ENCODE measurements at regions of chr2 and their contacts with region 1.

Region 1: DNA sequence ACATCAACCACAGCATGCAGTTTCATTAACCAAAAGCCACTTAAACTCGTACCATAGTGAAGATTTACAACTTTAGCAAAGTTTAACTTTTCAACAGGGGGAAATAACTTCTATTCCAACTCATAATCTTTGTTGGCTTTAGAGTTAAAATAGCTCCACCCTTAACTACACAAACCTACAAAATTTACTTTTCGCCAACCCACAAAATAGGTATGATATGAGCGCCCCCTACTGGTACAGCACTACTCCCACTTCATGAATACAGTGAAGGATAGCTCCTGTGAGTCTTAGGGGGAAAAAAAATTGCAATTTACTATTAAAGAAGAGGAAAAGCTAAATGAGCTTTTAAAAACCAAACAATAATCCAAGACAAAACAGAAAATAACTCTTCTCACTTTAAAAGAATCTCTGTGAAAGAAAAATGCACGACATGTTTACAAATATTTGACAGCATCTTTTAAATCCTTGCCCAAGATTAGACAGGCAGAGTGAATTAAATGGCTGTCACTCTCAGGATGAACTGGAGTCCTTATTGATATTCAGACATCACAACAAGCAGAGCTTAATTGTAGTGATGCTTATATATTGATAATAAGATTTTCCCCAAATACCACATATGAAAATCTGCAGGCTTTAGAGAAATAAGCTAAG is 32.2 kb downstream of the TMEFF2 start:
- DNase-seq: peak; percentile 7 to 70 (median 57)
- ATAC-seq: peak; percentile 82
- H3K4me3 ChIP-seq: no peak overlapping the region
- H3K4me3 Mint-ChIP-seq: peak overlapping the region in 7 of 10 donors; percentile 31 to 56 (median 44)
- H3K27ac ChIP-seq: no peak overlapping the region
- H3K27ac Mint-ChIP-seq: no peak overlapping the region
- H3K4me1 ChIP-seq: peaks cover 0 to 9% of the 10 kb centered on the region in 2 donors
- H3K4me1 Mint-ChIP-seq: peaks cover 8 to 22% (median 13%) of the 10 kb centered on the region in 7 donors
- H3K27me3 ChIP-seq: no peaks in the 10 kb centered on the region
- H3K27me3 Mint-ChIP-seq: peaks cover 8 to 18% (median 12%) of the 10 kb centered on the region in 5 donors

Region 2: GRCh38 chr2:191539068-191539467 is 623.4 kb before region 1 on chr2:
- CTCF ChIA-PET with region 1: interaction called, 10 read pairs
- POLR2A ChIA-PET with region 1: no interaction called
- intact Hi-C with region 1: loop called in 1 of 2 experiments (anchors 1 kb)
- DNase-seq: peak in 4 of 9 donors; percentile 3 to 17 (median 12)
- ATAC-seq: no peak
- H3K4me3 ChIP-seq: no peak overlapping the region
- H3K4me3 Mint-ChIP-seq: no peak overlapping the region
- H3K27ac ChIP-seq: no peak overlapping the region
- H3K27ac Mint-ChIP-seq: no peak overlapping the region
- H3K4me1 ChIP-seq: no peaks in the 10 kb centered on the region
- H3K4me1 Mint-ChIP-seq: peaks cover 0 to 5% (median 0%) of the 10 kb centered on the region in 7 donors
- H3K27me3 ChIP-seq: no peaks in the 10 kb centered on the region
- H3K27me3 Mint-ChIP-seq: peaks cover 0 to 7% (median 0%) of the 10 kb centered on the region in 5 donors

Region 3: DNA sequence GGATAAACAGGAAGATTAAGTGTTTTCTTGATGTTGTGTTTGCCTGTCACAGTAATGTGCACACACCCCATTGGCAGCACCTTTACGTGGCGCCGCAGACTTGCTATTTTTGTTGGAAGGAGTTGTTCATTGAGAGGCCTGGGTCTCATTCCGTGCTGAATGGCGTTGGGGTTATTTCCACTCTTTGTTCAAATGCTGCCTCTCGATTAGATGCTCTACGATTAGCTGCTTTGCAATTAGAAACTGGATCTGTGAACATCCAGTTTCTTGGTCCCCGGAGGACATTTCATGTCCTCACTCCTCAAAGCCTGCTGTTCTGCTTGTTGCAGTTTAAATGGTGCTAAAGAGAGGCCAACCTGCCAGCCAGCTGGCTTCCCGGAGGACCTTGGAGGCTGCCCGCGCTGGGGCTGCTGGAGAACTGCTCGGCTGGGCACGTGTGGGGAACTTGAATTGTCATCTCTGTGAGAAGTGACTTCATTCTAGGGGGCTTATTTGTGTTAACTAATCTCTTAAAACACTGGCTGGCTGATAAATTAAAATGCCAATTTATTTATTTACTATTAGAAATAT is 602.0 kb before region 1 on chr2:
- CTCF ChIA-PET with region 1: interaction called, 76 read pairs
- POLR2A ChIA-PET with region 1: interaction called, 4 read pairs
- intact Hi-C with region 1: loop called (anchors 1 kb)
- DNase-seq: no peak
- ATAC-seq: no peak
- H3K4me3 ChIP-seq: no peak overlapping the region
- H3K4me3 Mint-ChIP-seq: no peak overlapping the region
- H3K27ac ChIP-seq: no peak overlapping the region
- H3K27ac Mint-ChIP-seq: no peak overlapping the region
- H3K4me1 ChIP-seq: no peaks in the 10 kb centered on the region
- H3K4me1 Mint-ChIP-seq: peaks cover 0 to 14% (median 3%) of the 10 kb centered on the region in 7 donors
- H3K27me3 ChIP-seq: peaks cover 0 to 7% of the 10 kb centered on the region in 2 donors
- H3K27me3 Mint-ChIP-seq: peaks cover 4 to 53% (median 17%) of the 10 kb centered on the region in 5 donors

Region 4: GRCh38 chr2:191691016-191691735 is 471.3 kb before region 1 on chr2:
- CTCF ChIA-PET with region 1: interaction called, 3 read pairs
- POLR2A ChIA-PET with region 1: no interaction called
- intact Hi-C with region 1: loop called (anchors 1 to 2 kb)
- DNase-seq: peak in 7 of 9 donors; percentile 44 to 69 (median 61)
- ATAC-seq: peak; percentile 93
- H3K4me3 ChIP-seq: no peak overlapping the region
- H3K4me3 Mint-ChIP-seq: no peak overlapping the region
- H3K27ac ChIP-seq: no peak overlapping the region
- H3K27ac Mint-ChIP-seq: peak overlapping the region in 5 of 9 donors; percentile 31 to 61 (median 44)
- H3K4me1 ChIP-seq: peaks cover 3 to 11% of the 10 kb centered on the region in 2 donors
- H3K4me1 Mint-ChIP-seq: peaks cover 8 to 28% (median 15%) of the 10 kb centered on the region in 7 donors
- H3K27me3 ChIP-seq: no peaks in the 10 kb centered on the region
- H3K27me3 Mint-ChIP-seq: no peaks in the 10 kb centered on the region

Region 5: DNA sequence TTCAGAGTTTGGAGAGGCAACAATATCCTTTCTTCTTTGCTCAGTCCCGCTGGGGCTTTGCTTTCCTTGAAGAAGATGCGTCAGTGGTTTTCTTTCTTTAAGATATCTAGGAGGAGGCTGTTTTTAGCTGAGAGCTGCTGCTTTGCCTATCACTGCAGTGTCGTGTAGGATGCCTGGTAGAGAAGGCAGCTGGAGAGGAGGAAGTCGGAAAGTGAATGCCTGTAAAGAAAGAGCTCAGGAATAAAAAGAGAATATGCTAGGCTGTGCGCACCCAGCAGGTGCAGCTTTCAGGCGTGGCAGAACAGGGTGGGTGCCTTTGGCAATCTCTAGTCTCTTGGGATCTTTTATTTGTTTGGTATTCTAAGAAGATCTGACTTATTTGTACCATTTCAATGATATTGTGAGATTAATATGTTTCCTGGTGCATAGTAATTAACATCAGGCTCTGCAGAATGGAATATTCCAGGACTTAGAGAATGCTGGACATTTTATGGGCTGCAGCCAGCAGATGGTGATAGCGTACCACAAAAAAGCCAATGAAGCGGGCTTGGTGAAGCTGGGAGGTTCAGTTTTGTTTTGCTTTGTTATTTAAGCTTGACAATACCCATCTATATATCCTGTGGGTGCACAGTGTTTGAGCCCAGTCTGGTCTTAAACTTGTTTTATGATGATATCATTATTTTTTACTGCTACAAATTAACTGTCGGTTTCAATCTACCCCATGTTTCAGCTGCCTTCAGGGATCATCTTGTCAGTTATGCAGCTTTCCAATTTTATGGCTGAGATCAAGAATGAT is 350.5 kb before region 1 on chr2:
- CTCF ChIA-PET with region 1: interaction called, 8 read pairs
- POLR2A ChIA-PET with region 1: no interaction called
- intact Hi-C with region 1: loop called (anchors 1 kb)
- DNase-seq: peak in 5 of 9 donors; percentile 3 to 22 (median 11)
- ATAC-seq: peak; percentile 57
- H3K4me3 ChIP-seq: no peak overlapping the region
- H3K4me3 Mint-ChIP-seq: no peak overlapping the region
- H3K27ac ChIP-seq: no peak overlapping the region
- H3K27ac Mint-ChIP-seq: no peak overlapping the region
- H3K4me1 ChIP-seq: no peaks in the 10 kb centered on the region
- H3K4me1 Mint-ChIP-seq: no peaks in the 10 kb centered on the region
- H3K27me3 ChIP-seq: no peaks in the 10 kb centered on the region
- H3K27me3 Mint-ChIP-seq: peaks cover 4 to 34% (median 22%) of the 10 kb centered on the region in 5 donors

Measured in naive thymus-derived CD4-positive, alpha-beta T cell (primary cell).